ENCODE measurements at regions of chr11 and their contacts with region 1.

Region 1: DNA sequence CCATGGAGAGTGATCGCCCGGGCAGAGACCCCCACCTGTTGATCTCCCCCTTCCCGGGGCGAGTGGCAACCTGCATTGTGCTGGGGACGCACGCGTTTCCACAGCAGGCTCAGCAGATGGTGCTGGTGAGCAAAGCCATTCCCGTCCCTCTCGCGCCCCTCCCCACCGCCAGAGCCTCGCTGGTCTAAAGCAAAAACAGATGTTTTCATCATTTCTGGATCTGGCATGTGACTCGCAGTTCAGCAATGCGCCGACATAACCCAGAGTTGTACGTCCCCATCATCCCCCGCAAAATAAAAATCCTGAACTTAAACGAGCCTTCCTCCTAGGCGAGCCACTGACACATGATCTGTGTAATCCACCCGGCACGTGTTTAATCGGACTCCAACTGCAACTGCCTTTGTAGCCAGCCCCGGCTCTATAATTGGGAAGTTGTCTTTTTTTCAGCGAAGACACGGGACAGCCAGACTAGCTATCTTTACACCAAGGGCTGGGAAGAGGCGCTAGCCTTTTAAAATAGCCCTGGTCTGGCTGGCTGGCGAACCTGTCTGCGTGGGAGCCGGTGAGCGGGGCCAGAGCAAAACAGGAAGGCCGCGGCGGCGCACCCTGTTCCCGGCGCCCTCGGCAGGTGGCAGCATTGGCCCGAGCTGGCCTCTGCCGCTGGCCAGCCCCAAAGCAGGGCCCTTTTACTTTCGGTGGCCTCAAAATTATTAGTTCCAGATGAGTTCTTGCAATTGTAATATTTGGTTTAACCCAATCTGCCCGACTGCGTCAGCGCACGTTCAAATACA is 203.0 kb upstream of the SORL1-AS1 start:
- DNase-seq: peak; percentile 25
- ATAC-seq: peak; percentile 99
- H3K4me3 ChIP-seq: peak overlapping the region; percentile 62
- H3K27ac ChIP-seq: no peak overlapping the region
- H3K4me1 ChIP-seq: peaks cover 3% of the 10 kb centered on the region
- H3K27me3 ChIP-seq: no peaks in the 10 kb centered on the region
- CTCF ChIP-seq: peak; percentile 81 to 96 (median 96)
- EP300 ChIP-seq: no peak
- POLR2A ChIP-seq: no peak
- RAD21 ChIP-seq: peak; percentile 79

Region 2: GRCh38 chr11:121643535-121644512 is 11.9 kb before region 1 on chr11:
- CTCF ChIA-PET with region 1: interaction called, 37 read pairs
- POLR2A ChIA-PET with region 1: no interaction called
- RAD21 ChIA-PET with region 1: interaction called, 5 read pairs
- SMC1A ChIA-PET with region 1: interaction called, 8 read pairs
- in situ Hi-C with region 1: no loop called
- intact Hi-C with region 1: no loop called
- DNase-seq: no peak
- ATAC-seq: no peak
- H3K4me3 ChIP-seq: no peak overlapping the region
- H3K27ac ChIP-seq: no peak overlapping the region
- H3K4me1 ChIP-seq: no peaks in the 10 kb centered on the region
- H3K27me3 ChIP-seq: no peaks in the 10 kb centered on the region
- CTCF ChIP-seq: no peak
- EP300 ChIP-seq: no peak
- POLR2A ChIP-seq: no peak
- RAD21 ChIP-seq: no peak

Region 3: GRCh38 chr11:121790430-121790829 is 134.7 kb after region 1 on chr11:
- CTCF ChIA-PET with region 1: no interaction called
- POLR2A ChIA-PET with region 1: no interaction called
- RAD21 ChIA-PET with region 1: no interaction called
- SMC1A ChIA-PET with region 1: no interaction called
- in situ Hi-C with region 1: no loop called
- intact Hi-C with region 1: no loop called
- DNase-seq: no peak
- ATAC-seq: no peak
- H3K4me3 ChIP-seq: no peak overlapping the region
- H3K27ac ChIP-seq: no peak overlapping the region
- H3K4me1 ChIP-seq: no peaks in the 10 kb centered on the region
- H3K27me3 ChIP-seq: no peaks in the 10 kb centered on the region
- CTCF ChIP-seq: no peak
- EP300 ChIP-seq: no peak
- POLR2A ChIP-seq: no peak
- RAD21 ChIP-seq: no peak

Region 4: DNA sequence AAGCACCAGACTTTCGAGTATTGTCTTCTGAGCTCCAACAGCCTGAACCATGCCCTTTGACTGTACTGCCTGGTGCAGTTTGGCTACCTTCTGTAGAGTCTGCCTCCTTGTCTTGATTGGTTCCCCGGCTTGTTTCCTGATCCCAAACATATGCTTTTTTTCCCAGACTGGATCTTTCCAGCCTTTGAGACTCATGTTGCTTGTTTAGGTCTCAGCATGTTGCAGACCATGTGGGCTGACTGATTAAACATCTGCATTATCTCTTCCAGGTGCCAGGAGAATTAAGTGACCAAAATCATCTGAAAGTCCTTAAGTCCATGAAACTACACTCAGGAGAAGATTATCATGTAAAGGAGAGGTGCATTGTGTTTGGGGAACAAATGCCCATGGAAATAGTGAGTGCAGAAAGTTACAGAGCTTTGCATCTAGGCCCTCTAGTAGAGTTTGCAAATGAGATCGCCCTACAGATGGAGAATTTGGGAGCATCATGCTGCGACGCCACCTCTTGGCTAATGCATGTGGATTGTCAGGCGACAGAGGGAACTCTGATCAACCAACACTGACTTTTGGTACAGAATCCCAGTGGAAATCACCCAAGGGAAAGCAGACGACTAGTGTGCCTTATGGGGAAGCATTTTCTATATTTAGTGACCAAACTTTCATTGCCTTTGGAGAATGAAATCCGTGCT is 271.5 kb after region 1 on chr11:
- CTCF ChIA-PET with region 1: no interaction called
- POLR2A ChIA-PET with region 1: no interaction called
- RAD21 ChIA-PET with region 1: no interaction called
- SMC1A ChIA-PET with region 1: no interaction called
- in situ Hi-C with region 1: no loop called
- intact Hi-C with region 1: no loop called
- DNase-seq: no peak
- ATAC-seq: no peak
- H3K4me3 ChIP-seq: no peak overlapping the region
- H3K27ac ChIP-seq: no peak overlapping the region
- H3K4me1 ChIP-seq: peaks cover 3% of the 10 kb centered on the region; the same call in 1 of the 2 replicates
- H3K27me3 ChIP-seq: no peaks in the 10 kb centered on the region
- CTCF ChIP-seq: no peak
- EP300 ChIP-seq: no peak
- POLR2A ChIP-seq: no peak
- RAD21 ChIP-seq: no peak

Region 5: GRCh38 chr11:121964591-121964990 is 308.9 kb after region 1 on chr11:
- CTCF ChIA-PET with region 1: no interaction called
- POLR2A ChIA-PET with region 1: no interaction called
- RAD21 ChIA-PET with region 1: no interaction called
- SMC1A ChIA-PET with region 1: interaction called, 3 read pairs
- in situ Hi-C with region 1: no loop called
- intact Hi-C with region 1: loop called (anchors 10 kb)
- DNase-seq: no peak
- ATAC-seq: no peak
- H3K4me3 ChIP-seq: no peak overlapping the region
- H3K27ac ChIP-seq: no peak overlapping the region
- H3K4me1 ChIP-seq: no peaks in the 10 kb centered on the region
- H3K27me3 ChIP-seq: no peaks in the 10 kb centered on the region; a peak in 1 of 4 replicates
- CTCF ChIP-seq: no peak
- EP300 ChIP-seq: no peak
- POLR2A ChIP-seq: no peak
- RAD21 ChIP-seq: no peak

Region 6: DNA sequence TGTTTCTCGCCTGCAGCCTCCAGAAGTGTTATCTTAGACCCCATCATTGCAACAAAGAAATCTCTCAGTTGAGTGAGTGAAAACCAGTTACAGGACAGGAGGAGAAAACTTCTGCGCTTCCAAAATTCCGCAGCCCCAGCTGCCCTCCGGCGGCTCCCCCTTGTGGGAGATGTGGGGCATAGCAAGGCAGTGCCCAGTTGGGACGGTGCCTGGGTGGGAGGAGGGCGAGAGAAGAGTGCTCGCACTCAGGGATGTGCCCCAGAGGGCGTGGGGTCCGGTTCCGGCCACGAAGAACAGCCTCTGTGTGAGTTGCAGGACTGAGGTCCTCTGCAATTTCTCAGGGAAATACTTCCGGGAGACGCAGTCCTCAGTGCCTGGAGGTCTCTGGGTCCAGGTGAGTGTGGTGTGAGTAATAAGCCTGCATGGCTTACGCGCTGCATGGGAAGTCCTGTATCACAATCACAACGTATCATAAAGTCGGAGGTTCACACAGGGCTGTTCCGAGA is 547.3 kb after region 1 on chr11:
- CTCF ChIA-PET with region 1: interaction called, 46 read pairs
- POLR2A ChIA-PET with region 1: no interaction called
- RAD21 ChIA-PET with region 1: interaction called, 7 read pairs
- SMC1A ChIA-PET with region 1: interaction called, 10 read pairs
- in situ Hi-C with region 1: loop called (anchors 5 kb)
- intact Hi-C with region 1: loop called (anchors 1 kb)
- DNase-seq: no peak
- ATAC-seq: peak; percentile 96
- H3K4me3 ChIP-seq: no peak overlapping the region
- H3K27ac ChIP-seq: no peak overlapping the region
- H3K4me1 ChIP-seq: no peaks in the 10 kb centered on the region
- H3K27me3 ChIP-seq: peaks cover 3 to 8% of the 10 kb centered on the region in 2 experiments
- CTCF ChIP-seq: peak; percentile 86 to 95 (median 93)
- EP300 ChIP-seq: no peak
- POLR2A ChIP-seq: no peak
- RAD21 ChIP-seq: peak; percentile 85

Region 7: DNA sequence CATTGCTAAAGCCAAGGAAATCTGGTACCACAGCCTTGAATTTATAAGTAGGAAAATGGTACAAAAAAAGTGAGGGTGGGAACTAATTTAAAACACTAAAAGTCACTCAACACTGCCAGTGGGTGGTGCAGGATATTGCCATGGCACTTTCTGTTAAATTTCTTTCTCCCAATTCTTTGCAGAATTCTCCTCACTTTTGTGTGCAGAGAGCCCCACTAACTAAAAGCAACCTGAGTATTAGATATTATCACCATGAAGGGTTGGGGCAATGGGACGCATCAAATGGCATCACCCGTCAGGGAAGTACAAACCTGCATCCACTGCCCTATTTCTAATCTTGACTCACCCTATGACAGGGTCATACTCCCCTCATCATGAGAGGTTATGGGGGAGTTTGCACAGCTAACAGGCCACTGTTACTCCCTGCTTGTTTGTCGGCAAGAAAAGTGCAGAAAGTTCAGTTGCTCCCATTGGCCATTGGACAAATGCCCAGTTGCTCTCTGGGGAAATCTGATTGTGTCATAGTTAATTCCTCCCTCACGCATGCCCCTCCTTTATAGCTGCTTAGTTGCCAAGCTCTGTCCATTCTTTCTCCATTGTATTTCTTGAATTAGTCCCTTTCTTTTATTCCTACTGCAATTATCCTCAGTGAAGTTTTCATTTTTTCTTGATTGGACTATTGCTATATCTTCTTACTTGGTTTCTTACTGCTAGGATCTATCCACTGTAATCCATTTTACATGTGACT is 554.1 kb after region 1 on chr11:
- CTCF ChIA-PET with region 1: interaction called, 46 read pairs
- POLR2A ChIA-PET with region 1: no interaction called
- RAD21 ChIA-PET with region 1: no interaction called
- SMC1A ChIA-PET with region 1: no interaction called
- in situ Hi-C with region 1: loop called (anchors 5 kb)
- intact Hi-C with region 1: no loop called
- DNase-seq: no peak
- ATAC-seq: no peak
- H3K4me3 ChIP-seq: no peak overlapping the region
- H3K27ac ChIP-seq: no peak overlapping the region
- H3K4me1 ChIP-seq: no peaks in the 10 kb centered on the region
- H3K27me3 ChIP-seq: peaks cover 3 to 5% of the 10 kb centered on the region in 2 experiments
- CTCF ChIP-seq: no peak
- EP300 ChIP-seq: no peak
- POLR2A ChIP-seq: no peak
- RAD21 ChIP-seq: no peak

Region 8: GRCh38 chr11:122505304-122506006 is 849.7 kb after region 1 on chr11:
- CTCF ChIA-PET with region 1: interaction called, 6 read pairs
- POLR2A ChIA-PET with region 1: no interaction called
- RAD21 ChIA-PET with region 1: interaction called, 6 read pairs
- SMC1A ChIA-PET with region 1: interaction called, 3 read pairs
- in situ Hi-C with region 1: loop called (anchors 5 kb)
- intact Hi-C with region 1: loop called (anchors 1 kb)
- DNase-seq: peak; percentile 7
- ATAC-seq: peak; percentile 97
- H3K4me3 ChIP-seq: no peak overlapping the region
- H3K27ac ChIP-seq: no peak overlapping the region
- H3K4me1 ChIP-seq: no peaks in the 10 kb centered on the region
- H3K27me3 ChIP-seq: no peaks in the 10 kb centered on the region
- CTCF ChIP-seq: peak; percentile 78 to 88 (median 84)
- EP300 ChIP-seq: no peak
- POLR2A ChIP-seq: no peak
- RAD21 ChIP-seq: peak; percentile 81

Measured in GM12878 (cell line).